Left cardiac atrium (tissue), 4 donors: ENCODE measurements at regions of chrX and their contacts with region 1.

Region 1: GRCh38 chrX:19887911-19888879 is 795 bp upstream of the SH3KBP1 start:
- DNase-seq: peak; percentile 40
- ATAC-seq: peak; percentile 72 to 78

Region 2: GRCh38 chrX:18654875-18655836 is 1233.0 kb before region 1 on chrX:
- intact Hi-C with region 1: no loop called
- DNase-seq: no peak
- ATAC-seq: no peak

Region 3: DNA sequence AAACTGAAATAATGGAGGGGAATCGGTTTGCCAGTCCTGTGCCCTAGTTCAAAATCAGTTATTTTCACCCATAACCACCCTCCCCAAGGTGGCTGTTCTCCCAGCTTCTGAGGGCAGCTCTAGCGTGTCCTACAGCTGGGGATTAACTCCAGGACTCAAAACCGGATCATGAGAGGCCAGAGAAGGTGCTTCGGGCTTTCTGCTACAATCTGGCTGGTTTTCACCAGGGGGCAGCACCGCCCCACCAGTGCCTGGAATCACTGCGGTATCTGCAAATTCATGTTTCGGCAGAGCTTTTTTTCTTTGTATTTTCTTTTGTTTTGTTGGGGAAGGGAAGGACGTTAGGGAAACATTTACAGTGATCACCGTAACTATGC is 516.0 kb before region 1 on chrX:
- intact Hi-C with region 1: loop called in 1 of 2 experiments (anchors 5 kb)
- DNase-seq: peak; percentile 53
- ATAC-seq: peak; percentile 62 to 91

Region 4: DNA sequence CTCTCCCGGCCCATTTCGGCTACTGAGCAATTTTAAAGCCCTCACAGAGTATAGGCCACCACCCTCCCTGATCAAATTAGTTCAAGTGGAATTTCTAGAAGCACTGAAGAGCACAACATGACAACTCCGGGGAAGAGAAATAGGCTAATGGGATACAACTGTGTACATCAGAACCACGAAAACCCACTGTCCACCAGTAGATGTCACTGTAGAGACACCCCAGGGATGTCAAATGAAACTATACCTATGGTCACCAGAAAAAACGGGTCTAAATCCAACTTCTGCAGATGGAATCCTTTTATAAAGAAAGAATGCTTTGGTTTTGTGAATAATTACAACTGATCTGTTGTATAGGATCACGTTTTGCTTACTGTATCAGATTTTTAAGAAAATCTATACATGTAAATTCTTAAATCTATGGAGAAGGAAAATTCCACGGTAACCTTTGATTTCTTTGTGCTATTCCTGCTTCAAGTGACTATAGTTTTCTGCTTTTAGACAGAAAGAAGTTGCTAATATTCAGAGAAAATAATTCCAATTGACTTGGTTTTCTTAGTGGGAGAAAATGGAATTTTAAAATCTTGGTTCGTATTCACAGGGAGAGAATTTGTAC is 343.4 kb before region 1 on chrX:
- intact Hi-C with region 1: loop called in 1 of 2 experiments (anchors 5 kb)
- DNase-seq: no peak
- ATAC-seq: peak; percentile 79 to 83

Region 5: GRCh38 chrX:19739683-19740082 is 148.5 kb before region 1 on chrX:
- intact Hi-C with region 1: loop called in 1 of 2 experiments (anchors 2 kb)
- DNase-seq: peak; percentile 58
- ATAC-seq: peak; percentile 38 to 72

Region 6: GRCh38 chrX:20112021-20112797 is 224.0 kb after region 1 on chrX:
- intact Hi-C with region 1: no loop called
- DNase-seq: no peak
- ATAC-seq: no peak